PC-3 (cell line): ENCODE measurements at regions of chr15 and their contacts with region 1.

Region 1: DNA sequence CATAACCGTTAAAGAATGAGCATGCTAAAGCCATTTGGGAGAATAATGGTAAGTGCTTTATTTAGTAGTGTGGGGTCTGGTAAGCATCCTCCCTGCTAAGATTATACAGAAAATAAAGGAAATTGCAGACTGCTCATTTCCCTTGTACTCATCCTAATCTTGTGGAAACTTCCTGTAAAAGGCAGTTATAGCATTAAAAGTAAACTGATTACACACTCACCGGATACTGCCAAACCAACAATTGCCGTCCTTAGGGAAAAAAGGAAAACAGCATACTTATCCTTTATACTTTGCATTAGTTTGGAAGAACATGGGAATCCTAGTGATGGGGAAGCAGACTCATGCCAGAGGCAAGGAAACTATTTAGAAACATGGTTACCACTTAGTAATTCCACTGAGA is 5.3 kb upstream of the SPRED1 start:
- DNase-seq: peak; percentile 62
- ATAC-seq: peak; percentile 34
- H3K4me3 ChIP-seq: no peak overlapping the region
- H3K27ac ChIP-seq: peak overlapping the region; percentile 73
- H3K4me1 ChIP-seq: peaks cover 24% of the 10 kb centered on the region
- H3K27me3 ChIP-seq: no peaks in the 10 kb centered on the region
- CTCF ChIP-seq: no peak

Region 2: DNA sequence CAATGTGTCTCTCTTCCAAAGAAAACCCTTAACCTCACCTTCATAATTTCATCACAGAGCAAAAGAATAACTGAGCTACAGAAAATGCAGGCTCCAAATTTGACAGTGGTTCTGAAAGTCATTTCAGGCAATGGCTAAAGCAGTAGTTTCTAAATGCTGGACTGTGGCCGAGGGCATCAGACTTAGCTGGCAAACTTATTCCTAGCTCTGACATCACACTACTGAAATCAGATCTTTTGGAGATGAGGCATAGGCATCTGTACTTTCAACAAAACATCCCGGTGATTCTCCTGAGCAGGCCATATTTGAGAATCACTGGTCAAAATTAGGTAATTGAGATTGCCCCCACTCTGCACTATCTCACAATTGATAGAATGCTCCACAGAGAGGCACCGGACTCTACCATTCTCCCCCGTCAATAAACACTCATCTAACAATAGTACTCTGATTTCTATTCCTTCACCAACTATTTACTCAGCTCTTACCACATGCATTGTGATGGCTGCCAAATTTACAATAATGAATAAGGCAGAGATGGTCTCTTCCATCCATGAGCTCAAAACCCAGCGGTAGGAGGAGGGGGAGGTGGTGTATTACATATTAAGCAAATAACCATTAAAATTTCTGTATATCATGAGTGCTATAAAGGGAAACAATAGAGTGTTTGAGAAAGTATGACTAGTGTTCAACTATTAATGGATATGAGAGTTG is 52.0 kb before region 1 on chr15:
- CTCF ChIA-PET with region 1: interaction called, 6 read pairs
- POLR2A ChIA-PET with region 1: interaction called, 3 read pairs
- intact Hi-C with region 1: loop called (anchors 1 kb)
- DNase-seq: peak; percentile 78
- ATAC-seq: peak; percentile 82
- H3K4me3 ChIP-seq: no peak overlapping the region
- H3K27ac ChIP-seq: peak overlapping the region; percentile 84
- H3K4me1 ChIP-seq: peaks cover 42% of the 10 kb centered on the region
- H3K27me3 ChIP-seq: no peaks in the 10 kb centered on the region
- CTCF ChIP-seq: no peak